Caco-2 (cell line): ENCODE measurements at regions of chr4 and their contacts with region 1.

Region 1: GRCh38 chr4:142126890-142127497 is 490.6 kb downstream of the IL15 start:
- DNase-seq: peak; percentile 39 to 52
- H3K4me3 ChIP-seq: no peak overlapping the region
- H3K4me3 Mint-ChIP-seq: no peak overlapping the region
- H3K27ac Mint-ChIP-seq: no peak overlapping the region
- H3K4me1 ChIP-seq: peaks cover 11% of the 10 kb centered on the region
- H3K4me1 Mint-ChIP-seq: peaks cover 10% of the 10 kb centered on the region
- H3K27me3 ChIP-seq: no peaks in the 10 kb centered on the region
- H3K27me3 Mint-ChIP-seq: no peaks in the 10 kb centered on the region
- CTCF ChIP-seq: peak; percentile 68 to 72

Region 2: GRCh38 chr4:142265536-142265935 is 138.5 kb after region 1 on chr4:
- CTCF ChIA-PET with region 1: no interaction called
- POLR2A ChIA-PET with region 1: no interaction called
- intact Hi-C with region 1: loop called (anchors 10 kb)
- DNase-seq: no peak
- H3K4me3 ChIP-seq: no peak overlapping the region
- H3K4me3 Mint-ChIP-seq: no peak overlapping the region
- H3K27ac Mint-ChIP-seq: no peak overlapping the region
- H3K4me1 ChIP-seq: no peaks in the 10 kb centered on the region; the same call in 1 of the 2 replicates
- H3K4me1 Mint-ChIP-seq: no peaks in the 10 kb centered on the region
- H3K27me3 ChIP-seq: no peaks in the 10 kb centered on the region
- H3K27me3 Mint-ChIP-seq: no peaks in the 10 kb centered on the region
- CTCF ChIP-seq: no peak

Region 3: DNA sequence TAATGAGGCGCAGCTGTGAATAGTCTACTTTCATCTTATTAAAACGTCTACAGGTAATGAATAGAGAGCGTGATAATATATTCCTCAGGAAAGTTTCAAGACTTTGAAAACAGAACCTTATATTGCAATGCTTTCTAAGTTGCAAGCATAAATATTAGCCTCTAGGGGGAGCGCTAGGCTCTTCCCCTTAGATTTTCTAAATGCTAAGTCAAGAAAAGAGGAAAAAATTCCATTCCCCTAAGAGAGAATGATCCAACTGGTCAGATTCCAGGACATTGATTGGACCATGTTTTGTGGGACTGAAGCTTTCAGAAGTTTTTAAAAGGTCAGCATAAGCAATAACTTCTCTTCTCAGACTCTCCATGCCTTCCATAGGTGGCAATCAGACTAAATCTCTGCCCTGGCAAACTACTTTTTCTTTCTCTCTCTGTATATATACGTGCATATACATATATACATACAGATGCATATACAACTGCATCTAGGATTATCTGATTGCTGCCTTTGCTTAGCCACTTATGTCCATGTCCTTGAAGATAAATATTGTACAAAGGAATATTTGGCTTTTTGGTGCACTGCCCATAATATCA is 226.2 kb after region 1 on chr4:
- CTCF ChIA-PET with region 1: interaction called, 3 read pairs
- POLR2A ChIA-PET with region 1: no interaction called
- intact Hi-C with region 1: loop called (anchors 5 kb)
- DNase-seq: peak in 1 of 2 experiments; percentile 36
- H3K4me3 ChIP-seq: no peak overlapping the region
- H3K4me3 Mint-ChIP-seq: no peak overlapping the region
- H3K27ac Mint-ChIP-seq: no peak overlapping the region
- H3K4me1 ChIP-seq: peaks cover 77% of the 10 kb centered on the region
- H3K4me1 Mint-ChIP-seq: peaks cover 25% of the 10 kb centered on the region
- H3K27me3 ChIP-seq: no peaks in the 10 kb centered on the region
- H3K27me3 Mint-ChIP-seq: no peaks in the 10 kb centered on the region
- CTCF ChIP-seq: peak; percentile 61 to 67

Region 4: GRCh38 chr4:142567199-142567598 is 440.2 kb after region 1 on chr4:
- CTCF ChIA-PET with region 1: no interaction called
- POLR2A ChIA-PET with region 1: no interaction called
- intact Hi-C with region 1: loop called (anchors 10 kb)
- DNase-seq: peak; percentile 45 to 49
- H3K4me3 ChIP-seq: no peak overlapping the region
- H3K4me3 Mint-ChIP-seq: peak overlapping the region; percentile 68
- H3K27ac Mint-ChIP-seq: no peak overlapping the region
- H3K4me1 ChIP-seq: peaks cover 42% of the 10 kb centered on the region
- H3K4me1 Mint-ChIP-seq: peaks cover 19% of the 10 kb centered on the region
- H3K27me3 ChIP-seq: no peaks in the 10 kb centered on the region
- H3K27me3 Mint-ChIP-seq: no peaks in the 10 kb centered on the region
- CTCF ChIP-seq: peak in 1 of 2 experiments; percentile 27

Region 5: DNA sequence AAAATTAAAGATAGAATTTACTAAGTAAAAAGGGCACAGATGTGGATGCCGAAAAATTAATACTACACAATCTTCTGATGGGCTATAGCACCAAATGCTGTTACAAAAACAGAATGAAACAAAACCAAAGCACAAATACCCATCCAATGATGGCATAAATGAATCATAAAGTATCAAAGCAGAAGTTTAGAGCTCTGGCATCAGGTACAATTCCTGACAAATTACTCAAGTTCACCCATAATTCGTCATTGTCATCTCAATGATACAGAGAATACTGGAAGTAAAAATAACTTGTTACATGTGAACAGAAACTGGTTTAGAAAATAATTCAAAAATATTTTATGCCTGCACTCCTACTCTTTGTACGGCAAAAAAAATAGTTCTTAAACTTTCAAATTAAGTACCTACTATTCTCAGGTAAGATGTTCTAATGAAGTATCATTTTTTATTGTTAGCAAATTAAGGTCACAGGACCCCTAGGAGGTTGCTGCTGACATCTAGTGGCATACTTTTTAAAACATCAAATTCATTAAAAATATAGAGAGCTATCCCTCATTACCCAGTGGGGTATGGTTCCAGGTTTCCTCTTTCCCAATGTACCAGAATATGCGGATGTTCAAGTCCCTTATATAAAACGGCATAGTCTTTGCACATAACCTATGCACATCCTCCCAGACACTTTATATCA is 593.0 kb after region 1 on chr4:
- CTCF ChIA-PET with region 1: no interaction called
- POLR2A ChIA-PET with region 1: no interaction called
- intact Hi-C with region 1: loop called (anchors 1 kb)
- DNase-seq: peak in 1 of 2 experiments; percentile 21
- H3K4me3 ChIP-seq: no peak overlapping the region
- H3K4me3 Mint-ChIP-seq: no peak overlapping the region
- H3K27ac Mint-ChIP-seq: no peak overlapping the region
- H3K4me1 ChIP-seq: no peaks in the 10 kb centered on the region
- H3K4me1 Mint-ChIP-seq: no peaks in the 10 kb centered on the region
- H3K27me3 ChIP-seq: no peaks in the 10 kb centered on the region
- H3K27me3 Mint-ChIP-seq: no peaks in the 10 kb centered on the region
- CTCF ChIP-seq: peak in 1 of 2 experiments; percentile 37

Region 6: GRCh38 chr4:142840516-142841123 is 713.6 kb after region 1 on chr4:
- CTCF ChIA-PET with region 1: no interaction called
- POLR2A ChIA-PET with region 1: no interaction called
- intact Hi-C with region 1: loop called (anchors 1 kb)
- DNase-seq: no peak
- H3K4me3 ChIP-seq: no peak overlapping the region
- H3K4me3 Mint-ChIP-seq: no peak overlapping the region
- H3K27ac Mint-ChIP-seq: no peak overlapping the region
- H3K4me1 ChIP-seq: no peaks in the 10 kb centered on the region
- H3K4me1 Mint-ChIP-seq: no peaks in the 10 kb centered on the region
- H3K27me3 ChIP-seq: no peaks in the 10 kb centered on the region
- H3K27me3 Mint-ChIP-seq: peaks cover 12% of the 10 kb centered on the region
- CTCF ChIP-seq: peak; percentile 56 to 58

Region 7: DNA sequence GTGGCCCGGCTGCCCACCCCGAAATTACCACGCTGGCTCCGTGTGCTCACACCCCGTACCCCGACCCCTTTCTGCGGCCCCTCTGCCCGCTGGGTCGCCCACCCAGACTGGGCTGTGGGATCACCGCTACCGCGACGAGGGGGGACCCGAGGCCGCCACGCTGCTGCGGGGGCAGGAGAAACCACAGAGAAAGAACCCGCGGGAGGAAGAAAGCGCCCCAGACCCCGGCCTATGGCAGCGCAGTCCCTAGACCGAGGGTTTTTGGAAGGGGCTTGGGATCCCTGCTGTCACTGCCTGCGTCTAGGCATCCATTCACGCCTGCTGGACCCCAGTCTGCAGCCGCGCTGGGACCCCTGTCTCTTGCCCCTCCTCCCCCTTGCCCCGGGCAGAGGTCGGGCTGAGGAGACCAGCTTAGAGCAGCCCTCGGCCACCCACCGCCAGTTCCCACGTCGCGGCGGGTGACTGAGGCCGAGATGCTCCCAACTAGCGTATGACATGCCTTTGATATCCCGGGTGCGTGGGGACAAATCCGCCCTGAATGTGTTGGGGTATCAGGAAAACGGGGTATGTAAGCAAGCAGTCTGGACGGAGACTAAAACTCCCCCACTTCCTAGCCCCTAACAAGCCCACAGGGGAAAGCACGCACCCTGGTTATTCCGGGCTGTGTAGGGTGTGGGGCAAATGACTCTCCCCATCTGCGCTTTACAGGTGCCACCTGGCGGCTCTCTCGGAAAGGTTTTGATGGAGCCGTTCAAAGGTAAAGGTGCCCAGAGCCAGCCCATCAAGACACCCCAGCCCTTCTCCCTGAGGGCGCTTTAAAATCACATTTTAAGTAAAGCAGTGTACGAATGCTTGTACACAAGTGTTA is 720.0 kb after region 1 on chr4:
- CTCF ChIA-PET with region 1: interaction called, 5 read pairs
- POLR2A ChIA-PET with region 1: no interaction called
- intact Hi-C with region 1: loop called (anchors 1 kb)
- DNase-seq: peak; percentile 57 to 65
- H3K4me3 ChIP-seq: peak overlapping the region; percentile 31
- H3K4me3 Mint-ChIP-seq: peak overlapping the region; percentile 74
- H3K27ac Mint-ChIP-seq: no peak overlapping the region
- H3K4me1 ChIP-seq: peaks cover 4% of the 10 kb centered on the region; the same call in 1 of the 2 replicates
- H3K4me1 Mint-ChIP-seq: no peaks in the 10 kb centered on the region
- H3K27me3 ChIP-seq: 0 out of 2 replicates have a peak, but pooled peaks cover 1% of the 10 kb centered on the region
- H3K27me3 Mint-ChIP-seq: peaks cover 24% of the 10 kb centered on the region
- CTCF ChIP-seq: peak; percentile 61